Ovary (tissue), 10 donors: ENCODE measurements at regions of chr5 and their contacts with region 1.

Region 1: DNA sequence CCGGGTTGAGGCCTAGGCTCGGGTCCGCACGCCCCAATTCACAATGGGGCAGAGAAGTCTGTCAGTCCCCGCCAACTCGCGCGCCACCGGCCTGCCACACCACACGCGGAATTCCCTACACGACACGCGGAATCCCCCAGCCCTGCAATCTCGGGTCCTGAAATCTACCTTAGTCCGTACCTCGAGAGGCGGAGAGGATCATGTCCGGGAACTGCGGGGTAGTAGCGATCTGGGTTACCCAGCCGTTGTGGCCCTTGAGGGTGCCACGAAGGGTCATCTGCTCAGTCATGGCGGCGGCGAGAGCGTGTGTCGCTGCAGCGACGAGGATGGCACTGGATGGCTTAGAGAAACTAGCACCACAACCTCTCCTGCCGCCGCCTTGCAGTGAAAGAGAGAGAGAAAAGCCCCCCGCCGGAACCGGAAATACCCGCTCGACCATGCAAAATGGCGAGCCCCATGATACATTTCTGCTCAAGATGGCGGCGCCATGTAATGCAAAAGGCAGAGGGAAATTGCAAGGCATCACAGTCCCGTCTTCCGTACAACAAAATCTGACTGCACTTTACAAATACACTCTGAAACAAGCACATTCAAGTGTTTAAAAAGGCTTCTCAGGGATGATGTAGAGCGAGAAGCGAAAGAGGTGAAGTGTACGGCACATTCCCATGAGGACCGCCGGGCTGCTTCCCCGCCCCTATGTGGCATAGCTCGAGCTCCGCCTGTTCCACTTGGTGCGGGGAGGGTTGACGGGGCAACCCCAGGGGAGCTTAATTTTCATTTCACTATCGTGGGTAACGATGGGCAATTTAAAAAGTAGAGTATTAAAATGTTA is at the start of gene RACK1:
- DNase-seq: peak; percentile 83 to 89 (median 85)
- H3K4me3 ChIP-seq: peak within 1 kb of the TSS; percentile 77
- H3K27ac ChIP-seq: peak within 1 kb of the TSS; percentile 67 to 74
- H3K4me1 ChIP-seq: peaks cover 18% of the 10 kb centered on the region
- H3K27me3 ChIP-seq: no peaks in the 10 kb centered on the region
- CTCF ChIP-seq: peak in 1 of 3 donors; percentile 11
- EP300 ChIP-seq: no peak
- POLR2A ChIP-seq: peak; percentile 66
- total RNA-seq, gene RACK1: 2,570 to 4,531 (median 3,203) TPM

Region 2: GRCh38 chr5:180810210-180810958 is 433.3 kb before region 1 on chr5:
- intact Hi-C with region 1: loop called in 1 of 4 experiments (anchors 10 kb)
- DNase-seq: peak; percentile 97 to 99 (median 99)
- H3K4me3 ChIP-seq: peak overlapping the region; percentile 64
- H3K27ac ChIP-seq: peak overlapping the region; percentile 93 to 98
- H3K4me1 ChIP-seq: peaks cover 19% of the 10 kb centered on the region
- H3K27me3 ChIP-seq: no peaks in the 10 kb centered on the region
- CTCF ChIP-seq: no peak
- EP300 ChIP-seq: no peak
- POLR2A ChIP-seq: peak; percentile 80

Region 3: GRCh38 chr5:181043285-181044092 is 200.2 kb before region 1 on chr5:
- intact Hi-C with region 1: no loop called
- DNase-seq: no peak
- H3K4me3 ChIP-seq: no peak overlapping the region
- H3K27ac ChIP-seq: no peak overlapping the region
- H3K4me1 ChIP-seq: no peaks in the 10 kb centered on the region
- H3K27me3 ChIP-seq: no peaks in the 10 kb centered on the region
- CTCF ChIP-seq: no peak
- EP300 ChIP-seq: no peak
- POLR2A ChIP-seq: no peak

Region 4: DNA sequence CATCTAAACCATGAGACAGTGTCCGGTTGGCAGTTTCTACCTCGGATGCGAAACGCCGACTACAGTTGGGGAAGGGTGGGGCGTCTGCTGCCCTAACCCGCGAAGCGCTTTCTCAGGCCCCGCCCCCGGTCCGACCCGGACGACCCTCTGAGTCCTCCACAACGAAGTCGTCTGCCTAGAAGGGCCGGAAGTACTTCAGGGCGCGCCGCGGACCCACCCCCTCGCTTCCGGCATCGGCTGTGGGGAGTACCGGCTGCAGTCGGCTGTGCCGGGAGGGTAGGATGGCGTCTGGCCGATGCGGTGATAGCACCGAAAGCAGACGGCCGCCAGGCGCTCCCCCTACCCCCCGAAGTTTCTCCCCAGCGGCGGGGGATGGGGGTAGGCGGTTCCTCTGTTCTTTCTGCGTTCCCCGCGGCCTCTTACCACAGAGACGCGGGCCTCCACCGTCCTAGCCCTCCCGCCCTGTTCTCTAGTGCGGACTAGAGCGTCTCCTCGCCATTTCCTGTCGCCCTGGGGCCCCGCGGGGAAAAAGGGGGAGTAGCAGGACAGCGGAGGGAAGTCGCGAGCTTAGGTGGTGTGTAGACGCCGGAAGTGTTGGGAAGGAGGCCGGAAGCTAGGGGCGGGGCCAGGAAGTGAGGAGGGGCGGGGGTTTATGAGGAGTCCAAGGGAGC is 20.5 kb before region 1 on chr5 and contains the start of gene TRIM41:
- intact Hi-C with region 1: loop called in 2 of 4 experiments (anchors 2 kb)
- DNase-seq: peak; percentile 98 to 100 (median 99)
- H3K4me3 ChIP-seq: peak within 1 kb of the TSS; percentile 86
- H3K27ac ChIP-seq: peak within 1 kb of the TSS; percentile 77 to 97
- H3K4me1 ChIP-seq: peaks cover 6% of the 10 kb centered on the region
- H3K27me3 ChIP-seq: no peaks in the 10 kb centered on the region
- CTCF ChIP-seq: peak in 1 of 3 donors; percentile 7
- EP300 ChIP-seq: peak; percentile 51
- POLR2A ChIP-seq: peak; percentile 95
- total RNA-seq, gene TRIM41: 8.2 to 22.7 (median 17.6) TPM